Panc1 (cell line): ENCODE measurements at regions of chr19 and their contacts with region 1.

Region 1: DNA sequence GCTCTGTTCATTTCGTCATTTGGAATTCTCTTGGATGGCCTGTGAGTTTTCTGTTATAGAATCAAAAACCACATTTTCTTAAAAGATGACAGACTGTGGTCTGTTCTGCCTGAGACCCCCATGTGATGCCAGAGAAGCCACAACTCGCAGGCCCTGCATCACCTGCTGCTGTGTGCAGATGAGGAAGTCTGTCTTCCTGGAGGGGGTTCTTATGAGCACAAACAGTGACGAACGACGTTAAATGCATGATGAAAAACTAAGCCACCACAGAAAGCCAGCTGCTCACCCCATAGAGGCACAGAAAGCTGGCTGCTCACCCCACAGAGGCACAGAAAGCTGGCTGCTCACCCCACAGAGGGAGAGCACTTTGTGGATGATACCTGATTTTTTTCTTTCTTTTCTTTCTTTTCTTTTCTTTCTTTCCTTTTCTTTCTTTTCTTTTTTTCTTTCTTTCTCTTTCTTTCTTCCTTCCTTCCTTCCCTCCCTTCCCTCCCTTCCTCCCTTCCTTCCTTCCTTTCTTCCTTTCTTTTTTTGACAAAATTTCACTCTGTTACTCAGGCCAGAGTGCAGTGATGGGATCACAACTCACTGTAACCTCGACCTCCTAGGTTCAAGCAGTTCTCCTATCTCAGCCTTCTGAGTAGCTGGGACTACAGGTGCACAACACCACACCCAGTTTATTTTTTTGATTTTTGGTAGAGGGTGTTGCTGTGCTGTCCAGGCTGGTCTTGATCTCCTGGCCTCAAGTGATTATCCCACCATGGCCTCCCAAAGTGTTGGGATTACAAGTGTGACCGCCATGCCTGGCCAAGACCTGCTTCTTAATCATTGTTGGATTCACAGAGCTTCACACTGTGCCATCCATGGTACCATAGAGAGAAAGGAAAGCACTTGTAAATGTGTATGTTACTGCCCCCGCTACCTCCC is 1191.4 kb downstream of the UQCRFS1 start:
- DNase-seq: no peak
- ATAC-seq: no peak
- H3K4me3 ChIP-seq: no peak overlapping the region
- H3K27ac ChIP-seq: no peak overlapping the region
- H3K4me1 ChIP-seq: no peaks in the 10 kb centered on the region
- H3K27me3 ChIP-seq: no peaks in the 10 kb centered on the region
- CTCF ChIP-seq: no peak

Region 2: DNA sequence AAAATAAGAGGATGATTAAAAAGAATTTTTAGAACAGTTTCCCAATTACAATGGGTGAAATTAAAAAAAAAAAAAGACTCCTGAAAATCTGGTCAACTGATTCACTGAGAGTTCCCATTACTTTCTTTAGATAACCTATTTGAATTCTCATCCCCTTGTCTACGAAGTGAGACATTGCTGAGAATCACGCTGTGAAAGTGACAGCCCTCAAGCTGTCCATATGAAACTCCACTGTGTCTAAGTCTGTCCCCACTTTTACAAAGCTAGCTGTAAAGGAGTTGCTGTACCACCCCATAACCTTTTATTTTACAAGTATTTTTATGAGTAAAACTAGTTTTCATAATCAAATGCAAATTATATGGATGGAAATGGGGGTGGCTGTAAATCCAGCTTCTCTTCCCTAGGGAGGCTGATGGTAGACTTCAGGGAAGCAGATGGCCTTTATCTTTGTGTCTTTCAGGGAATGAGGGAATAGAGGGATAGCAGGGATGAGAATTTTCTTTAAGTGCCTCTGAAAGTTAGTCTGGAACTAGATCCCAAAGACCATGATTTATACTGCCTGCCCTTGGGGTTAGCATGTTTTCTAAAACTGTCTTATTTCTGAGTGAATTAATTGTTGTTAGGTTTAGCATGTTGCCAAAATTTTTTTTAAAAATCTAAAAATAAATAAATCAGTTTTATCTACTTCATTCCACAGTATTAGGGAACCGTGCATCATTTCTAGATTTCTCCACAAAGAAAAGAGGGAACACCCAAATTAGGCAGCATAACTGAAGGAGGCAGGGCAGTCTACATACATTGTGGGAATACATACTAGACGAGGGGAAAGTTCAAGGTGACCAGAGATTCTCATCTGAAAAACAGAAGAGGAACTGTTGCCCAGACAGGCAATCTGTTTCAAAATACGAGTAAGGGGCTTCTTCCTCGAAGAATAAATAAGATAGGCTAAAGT is 27.6 kb before region 1 on chr19:
- CTCF ChIA-PET with region 1: no interaction called
- POLR2A ChIA-PET with region 1: no interaction called
- in situ Hi-C with region 1: no loop called
- intact Hi-C with region 1: no loop called
- DNase-seq: no peak
- ATAC-seq: no peak
- H3K4me3 ChIP-seq: no peak overlapping the region
- H3K27ac ChIP-seq: no peak overlapping the region
- H3K4me1 ChIP-seq: no peaks in the 10 kb centered on the region
- H3K27me3 ChIP-seq: no peaks in the 10 kb centered on the region
- CTCF ChIP-seq: no peak

Region 3: GRCh38 chr19:28009696-28010095 is 11.8 kb before region 1 on chr19:
- CTCF ChIA-PET with region 1: interaction called, 12 read pairs
- POLR2A ChIA-PET with region 1: no interaction called
- in situ Hi-C with region 1: no loop called
- intact Hi-C with region 1: no loop called
- DNase-seq: no peak
- ATAC-seq: no peak
- H3K4me3 ChIP-seq: no peak overlapping the region
- H3K27ac ChIP-seq: no peak overlapping the region
- H3K4me1 ChIP-seq: no peaks in the 10 kb centered on the region
- H3K27me3 ChIP-seq: no peaks in the 10 kb centered on the region
- CTCF ChIP-seq: no peak